Breast epithelium (tissue), 4 donors: ENCODE measurements at regions of chr2 and their contacts with region 1.

Region 1: DNA sequence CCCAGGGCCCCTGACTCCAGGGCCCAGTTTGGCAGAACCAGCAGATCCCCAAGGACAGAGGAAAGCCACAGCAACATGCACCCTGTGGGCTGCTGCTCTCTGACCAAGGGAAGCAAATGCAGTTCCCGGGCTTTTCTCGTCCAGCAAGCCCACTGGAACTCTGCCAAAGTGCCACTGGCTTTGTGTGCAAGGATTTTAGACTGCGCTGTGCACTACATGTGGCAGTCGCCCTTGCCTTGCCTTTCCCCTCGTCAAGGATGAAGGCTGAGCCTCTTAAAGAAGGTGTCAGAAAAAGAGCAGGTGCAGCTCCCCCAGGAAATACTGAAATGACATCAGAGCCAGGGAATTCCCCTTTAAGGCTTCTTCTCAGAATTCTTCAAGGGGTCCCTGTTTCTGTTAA is 199.2 kb downstream of the TFCP2L1 start:
- DNase-seq: peak in 1 of 2 donors; percentile 67
- H3K4me3 ChIP-seq: no peak overlapping the region
- H3K27ac ChIP-seq: no peak overlapping the region
- H3K4me1 ChIP-seq: no peaks in the 10 kb centered on the region
- H3K27me3 ChIP-seq: no peaks in the 10 kb centered on the region
- CTCF ChIP-seq: no peak
- POLR2A ChIP-seq: no peak

Region 2: DNA sequence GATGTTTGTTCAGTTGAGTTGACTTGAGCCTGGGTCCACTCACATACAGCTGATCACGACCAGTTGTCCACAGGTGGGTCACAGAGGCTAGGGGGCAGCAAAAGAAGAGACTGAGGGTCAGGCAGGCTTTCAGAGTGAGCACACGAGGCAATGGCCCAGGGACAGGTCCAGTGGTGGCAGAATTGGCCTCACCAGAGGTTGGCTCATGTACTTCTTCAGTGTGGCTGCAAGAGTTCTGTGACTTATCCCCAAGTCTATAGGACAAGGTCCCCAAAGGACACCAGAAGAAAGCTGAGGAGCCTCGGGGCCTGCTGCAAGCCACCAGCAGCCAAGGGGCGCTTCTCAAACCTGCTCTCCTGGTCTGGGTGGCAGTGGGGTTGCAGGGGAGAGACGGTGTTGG is 20.6 kb before region 1 on chr2:
- intact Hi-C with region 1: loop called (anchors 1 kb)
- DNase-seq: no peak
- H3K4me3 ChIP-seq: no peak overlapping the region
- H3K27ac ChIP-seq: no peak overlapping the region
- H3K4me1 ChIP-seq: no peaks in the 10 kb centered on the region
- H3K27me3 ChIP-seq: no peaks in the 10 kb centered on the region
- CTCF ChIP-seq: no peak
- POLR2A ChIP-seq: no peak